PC-3 (cell line): ENCODE measurements at regions of chrX and their contacts with region 1.

Region 1: GRCh38 chrX:41561045-41561444 is 113.9 kb downstream of the NYX start:
- DNase-seq: peak; percentile 57
- ATAC-seq: peak; percentile 85
- H3K4me3 ChIP-seq: no peak overlapping the region
- H3K27ac ChIP-seq: 0 out of 2 replicates have a peak overlapping the region, but pooled peaks have one; percentile 13
- H3K4me1 ChIP-seq: peaks cover 9% of the 10 kb centered on the region
- H3K27me3 ChIP-seq: no peaks in the 10 kb centered on the region
- CTCF ChIP-seq: no peak

Region 2: GRCh38 chrX:41734530-41734929 is 173.5 kb after region 1 on chrX:
- CTCF ChIA-PET with region 1: no interaction called
- POLR2A ChIA-PET with region 1: no interaction called
- intact Hi-C with region 1: loop called (anchors 1 kb)
- DNase-seq: peak; percentile 46
- ATAC-seq: no peak
- H3K4me3 ChIP-seq: no peak overlapping the region
- H3K27ac ChIP-seq: no peak overlapping the region
- H3K4me1 ChIP-seq: no peaks in the 10 kb centered on the region
- H3K27me3 ChIP-seq: no peaks in the 10 kb centered on the region
- CTCF ChIP-seq: peak; percentile 60

Region 3: GRCh38 chrX:41750716-41751115 is 189.7 kb after region 1 on chrX:
- CTCF ChIA-PET with region 1: interaction called, 15 read pairs
- POLR2A ChIA-PET with region 1: no interaction called
- intact Hi-C with region 1: no loop called
- DNase-seq: no peak
- ATAC-seq: no peak
- H3K4me3 ChIP-seq: no peak overlapping the region
- H3K27ac ChIP-seq: no peak overlapping the region
- H3K4me1 ChIP-seq: no peaks in the 10 kb centered on the region
- H3K27me3 ChIP-seq: no peaks in the 10 kb centered on the region
- CTCF ChIP-seq: no peak

Region 4: DNA sequence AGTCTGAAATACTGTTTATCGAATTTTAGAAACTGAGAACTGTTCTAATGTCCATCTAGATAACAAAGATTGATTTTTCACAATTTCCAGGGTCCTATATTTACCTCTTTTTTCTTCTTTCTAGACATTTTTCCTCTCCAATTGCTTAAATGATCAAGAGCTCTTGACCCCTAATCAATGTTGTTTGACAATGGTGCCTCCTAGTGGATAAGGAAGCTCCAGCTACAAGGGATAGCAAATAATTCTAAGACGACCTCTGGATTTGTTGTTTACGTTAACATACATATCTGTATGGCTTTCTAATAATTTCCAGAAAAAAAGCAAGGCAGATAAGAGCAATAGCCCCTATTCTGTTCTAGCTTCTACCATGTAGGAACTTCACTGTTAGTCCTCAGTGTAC is 198.8 kb after region 1 on chrX:
- CTCF ChIA-PET with region 1: interaction called, 3 read pairs
- POLR2A ChIA-PET with region 1: no interaction called
- intact Hi-C with region 1: loop called (anchors 2 kb)
- DNase-seq: peak; percentile 39
- ATAC-seq: no peak
- H3K4me3 ChIP-seq: no peak overlapping the region
- H3K27ac ChIP-seq: no peak overlapping the region
- H3K4me1 ChIP-seq: peaks cover 34% of the 10 kb centered on the region
- H3K27me3 ChIP-seq: no peaks in the 10 kb centered on the region
- CTCF ChIP-seq: peak; percentile 68

Region 5: DNA sequence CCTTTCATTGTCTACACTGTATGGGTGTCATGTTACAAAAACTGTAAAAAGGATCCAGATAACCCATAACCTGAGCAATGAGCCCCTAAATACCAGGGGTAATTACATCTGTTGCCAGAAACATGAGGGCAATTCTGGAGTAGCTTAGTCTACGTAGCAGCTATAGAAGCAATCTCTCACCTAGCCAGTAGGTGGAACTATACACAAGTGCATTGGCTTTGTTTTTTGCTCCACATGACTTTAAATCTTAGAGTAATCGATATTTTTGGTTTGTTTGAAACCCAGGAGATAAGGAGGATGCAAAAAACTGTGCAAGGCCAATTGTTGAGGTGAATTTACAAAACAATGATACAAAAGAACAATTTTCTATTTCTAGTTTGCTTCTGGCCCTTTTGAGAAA is 220.5 kb after region 1 on chrX:
- CTCF ChIA-PET with region 1: no interaction called
- POLR2A ChIA-PET with region 1: no interaction called
- intact Hi-C with region 1: loop called (anchors 5 kb)
- DNase-seq: peak; percentile 69
- ATAC-seq: no peak
- H3K4me3 ChIP-seq: no peak overlapping the region
- H3K27ac ChIP-seq: no peak overlapping the region
- H3K4me1 ChIP-seq: peaks cover 28% of the 10 kb centered on the region
- H3K27me3 ChIP-seq: no peaks in the 10 kb centered on the region
- CTCF ChIP-seq: peak; percentile 87